ENCODE measurements at regions of chr17 and their contacts with region 1.

Region 1: DNA sequence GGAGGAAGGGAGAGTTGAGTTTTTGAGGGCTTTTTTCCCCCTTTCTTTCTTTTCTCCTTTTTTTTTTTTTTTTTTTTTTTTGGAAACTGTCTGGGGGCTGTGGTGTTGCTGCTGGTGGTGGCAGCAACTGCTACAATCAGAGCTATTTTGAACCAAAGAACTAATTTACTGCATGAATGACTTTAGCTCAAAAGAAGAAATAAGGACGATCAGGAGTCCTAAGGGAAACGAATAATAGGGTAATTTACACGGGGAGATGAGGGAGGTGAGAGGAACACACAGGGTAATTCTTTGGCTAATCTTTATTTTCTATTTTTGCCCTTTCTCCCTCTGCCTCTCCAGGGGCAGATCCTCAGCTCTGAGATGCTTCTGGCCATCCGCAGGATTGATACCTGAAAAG is 119.8 kb downstream of the TMEM132E start:
- DNase-seq: no peak
- ATAC-seq: no peak
- H3K4me3 ChIP-seq: no peak overlapping the region
- H3K27ac ChIP-seq: no peak overlapping the region
- H3K4me1 ChIP-seq: no peaks in the 10 kb centered on the region
- H3K27me3 ChIP-seq: peaks cover 49% of the 10 kb centered on the region; the same call in 1 of the 2 replicates
- CTCF ChIP-seq: no peak
- POLR2A ChIP-seq: no peak
- RAD21 ChIP-seq: no peak

Region 2: GRCh38 chr17:34740565-34741520 is 41.7 kb after region 1 on chr17:
- CTCF ChIA-PET with region 1: no interaction called
- POLR2A ChIA-PET with region 1: no interaction called
- RAD21 ChIA-PET with region 1: no interaction called
- intact Hi-C with region 1: loop called (anchors 5 kb)
- DNase-seq: no peak
- ATAC-seq: no peak
- H3K4me3 ChIP-seq: no peak overlapping the region
- H3K27ac ChIP-seq: no peak overlapping the region
- H3K4me1 ChIP-seq: no peaks in the 10 kb centered on the region
- H3K27me3 ChIP-seq: peaks cover 58% of the 10 kb centered on the region
- CTCF ChIP-seq: no peak
- POLR2A ChIP-seq: no peak
- RAD21 ChIP-seq: no peak